AG04449 (cell line): ENCODE measurements at regions of chr20 and their contacts with region 1.

Region 1: DNA sequence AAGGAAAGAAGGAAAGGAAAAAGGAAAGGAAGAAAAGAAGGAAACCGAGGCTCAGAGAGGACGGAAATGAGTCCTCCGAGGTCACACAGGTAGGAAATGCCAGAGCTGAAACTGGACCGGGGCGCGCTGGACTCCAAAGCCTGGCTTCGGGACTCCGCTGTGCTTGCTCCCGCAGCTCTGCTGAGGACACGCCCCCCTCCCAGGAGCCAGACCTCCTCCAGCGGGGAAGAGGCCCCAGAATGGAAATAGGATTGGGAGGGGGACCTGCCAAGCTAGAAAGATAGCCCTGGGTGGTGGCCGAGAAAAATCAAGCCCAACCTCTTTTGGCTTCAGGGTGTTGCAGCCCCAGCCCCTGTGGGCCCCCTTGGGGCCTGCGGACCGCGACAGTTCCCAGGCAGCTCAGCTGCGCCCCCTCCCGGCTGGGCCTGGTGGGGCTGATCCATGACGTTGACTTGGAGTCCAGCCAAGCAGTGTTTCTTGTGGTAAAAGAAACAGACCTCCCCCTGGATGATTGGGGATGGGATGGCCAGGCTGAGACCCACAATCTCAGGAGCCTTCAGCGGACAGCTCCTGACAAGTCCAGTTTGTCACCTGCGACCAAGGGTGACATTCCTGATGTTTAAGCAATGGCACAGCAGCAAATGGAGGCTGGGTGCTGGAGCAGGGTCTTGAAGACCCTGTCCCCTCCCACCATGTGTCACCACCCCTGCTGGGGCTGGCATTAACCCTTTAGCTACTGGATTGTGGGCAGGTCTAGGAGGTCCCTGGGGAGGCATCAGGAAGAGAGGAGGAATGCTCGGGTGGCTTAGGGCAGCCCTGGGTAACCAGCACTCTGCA is 55.5 kb downstream of the RIPOR3 start:
- DNase-seq: no peak
- H3K4me3 ChIP-seq: no peak overlapping the region
- CTCF ChIP-seq: peak; percentile 91

Region 2: GRCh38 chr20:50658796-50659323 is 23.0 kb after region 1 on chr20:
- CTCF ChIA-PET with region 1: interaction called, 21 read pairs
- POLR2A ChIA-PET with region 1: no interaction called
- DNase-seq: no peak
- H3K4me3 ChIP-seq: no peak overlapping the region
- CTCF ChIP-seq: no peak

Region 3: DNA sequence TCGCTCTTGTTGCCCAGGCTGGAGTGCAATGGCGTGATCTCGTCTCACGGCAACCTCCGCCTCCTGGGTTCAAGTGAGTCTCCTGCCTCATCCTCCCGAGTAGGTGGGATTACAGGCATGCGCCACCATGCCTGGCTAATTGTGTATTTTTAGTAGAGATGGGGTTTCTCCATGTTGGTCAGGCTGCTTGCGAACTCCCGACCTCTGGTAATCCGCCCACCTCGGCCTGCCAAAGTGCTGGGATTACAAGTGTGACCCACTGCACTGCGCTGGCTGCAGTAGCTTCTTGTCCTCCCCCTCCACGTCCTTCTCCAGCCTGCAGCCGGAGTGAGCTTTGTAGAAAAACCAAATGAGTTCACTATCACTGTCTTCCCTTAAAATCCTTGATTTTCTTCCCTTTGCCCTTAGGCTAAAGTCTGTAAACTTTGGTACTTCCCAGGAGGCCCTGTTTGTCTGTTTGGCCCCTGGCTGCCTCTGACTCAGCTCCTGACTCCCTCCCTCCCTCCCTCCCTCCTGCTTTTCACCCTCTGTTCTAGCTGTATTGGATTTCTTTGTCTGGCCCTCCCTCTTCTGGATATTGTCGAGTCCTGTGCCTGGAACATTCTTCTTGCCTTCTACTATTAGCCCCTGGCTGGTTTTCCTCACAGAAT is 108.4 kb after region 1 on chr20:
- CTCF ChIA-PET with region 1: interaction called, 174 read pairs
- POLR2A ChIA-PET with region 1: no interaction called
- DNase-seq: no peak
- H3K4me3 ChIP-seq: no peak overlapping the region
- CTCF ChIP-seq: peak; percentile 30